ENCODE measurements at regions of chr17 and their contacts with region 1.

Region 1: GRCh38 chr17:78289802-78290363 is 58.5 kb downstream of the TMEM235 start:
- DNase-seq: peak; percentile 61
- ATAC-seq: peak; percentile 99
- H3K4me3 Mint-ChIP-seq: no peak overlapping the region
- H3K27ac Mint-ChIP-seq: no peak overlapping the region
- H3K4me1 Mint-ChIP-seq: peaks cover 3% of the 10 kb centered on the region
- H3K27me3 Mint-ChIP-seq: no peaks in the 10 kb centered on the region
- CTCF ChIP-seq: no peak

Region 2: DNA sequence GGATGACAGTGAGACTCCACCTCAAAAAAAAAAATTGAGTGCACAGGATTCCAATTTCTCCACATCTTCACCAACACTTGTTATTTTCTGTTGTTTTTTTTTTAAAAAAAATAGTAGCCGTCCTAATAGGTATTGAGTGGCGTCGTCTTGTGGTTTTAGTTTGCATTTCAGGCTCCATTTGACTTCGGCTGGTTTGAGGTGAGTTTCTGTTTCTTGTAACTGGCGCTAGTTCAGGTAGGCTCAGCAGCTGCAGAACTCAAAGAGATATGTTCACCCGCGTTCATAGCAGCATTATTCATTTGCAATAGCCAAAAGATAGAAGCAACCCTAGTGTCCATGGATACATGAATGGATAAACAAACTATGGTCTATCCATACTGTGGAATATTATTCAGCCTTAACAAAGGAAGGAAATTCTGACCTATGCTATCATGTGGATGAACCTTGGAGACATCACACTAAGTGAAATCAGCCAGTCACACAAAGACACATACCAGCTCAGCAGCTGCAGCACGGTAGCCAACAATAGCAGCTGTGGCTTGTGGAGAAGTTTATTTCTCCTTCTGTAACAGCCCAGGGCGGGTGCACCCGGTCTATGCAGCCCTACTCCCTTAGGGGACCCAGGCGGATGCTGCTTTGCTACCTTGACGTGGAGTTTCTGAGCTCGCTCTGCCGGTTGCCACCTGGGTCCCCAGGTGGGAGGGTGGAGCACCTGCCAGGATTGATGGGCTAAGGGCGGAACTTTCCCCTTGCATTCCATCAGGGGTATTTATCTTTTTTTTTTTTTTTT is 13.6 kb before region 1 on chr17:
- CTCF ChIA-PET with region 1: no interaction called
- POLR2A ChIA-PET with region 1: interaction called, 7 read pairs
- intact Hi-C with region 1: loop called (anchors 1 kb)
- DNase-seq: peak; percentile 30
- ATAC-seq: peak; percentile 78
- H3K4me3 Mint-ChIP-seq: peak overlapping the region; percentile 38
- H3K27ac Mint-ChIP-seq: peak overlapping the region; percentile 65
- H3K4me1 Mint-ChIP-seq: peaks cover 42% of the 10 kb centered on the region
- H3K27me3 Mint-ChIP-seq: peaks cover 12% of the 10 kb centered on the region
- CTCF ChIP-seq: no peak

Region 3: DNA sequence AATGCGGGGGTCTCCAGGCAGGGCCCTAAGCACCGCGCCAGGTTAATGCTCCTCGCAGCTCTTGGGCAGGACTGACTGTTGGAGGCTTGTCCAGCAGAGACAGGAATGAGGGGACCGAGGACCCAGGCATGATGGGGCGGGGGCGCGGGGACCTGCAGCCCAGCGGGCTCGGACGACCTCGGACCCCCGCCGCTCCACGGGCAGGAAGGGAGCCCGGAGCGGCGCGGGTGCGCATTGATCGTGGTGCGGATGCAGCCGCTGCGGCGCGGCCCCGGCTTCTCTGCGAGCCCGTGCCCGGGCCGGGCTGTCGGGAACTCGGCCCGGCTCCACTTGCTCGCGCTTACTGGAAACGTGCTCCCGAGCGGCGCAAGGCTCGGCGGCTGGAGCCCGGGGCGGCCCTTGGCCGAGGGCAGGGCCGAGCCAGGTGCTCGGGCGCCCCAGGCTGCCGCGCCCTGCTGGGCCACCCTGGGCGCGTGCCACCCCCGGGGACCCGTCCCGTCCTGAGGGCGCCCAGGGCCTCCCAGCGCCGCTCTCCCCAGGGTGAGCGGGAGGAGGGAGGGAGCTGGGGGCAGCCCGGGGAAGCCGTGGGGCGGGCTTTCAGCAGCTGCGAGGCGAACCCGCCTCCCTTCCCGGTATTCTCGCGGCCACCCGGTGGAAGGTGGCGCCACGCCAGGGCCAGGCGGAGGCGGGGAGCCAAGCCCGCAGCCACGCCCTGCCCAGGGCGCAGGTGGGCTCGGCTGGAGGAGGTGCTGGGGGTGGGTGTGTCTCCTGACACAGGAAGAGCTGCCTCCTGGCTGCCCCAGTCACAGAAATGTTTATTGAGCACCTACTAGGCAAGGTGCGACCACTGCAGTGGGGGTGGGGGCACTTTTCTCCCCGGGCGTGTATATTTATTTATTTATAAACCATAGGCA is 24.1 kb after region 1 on chr17:
- CTCF ChIA-PET with region 1: interaction called, 5 read pairs
- POLR2A ChIA-PET with region 1: interaction called, 5 read pairs
- intact Hi-C with region 1: loop called (anchors 2 kb)
- DNase-seq: peak; percentile 65
- ATAC-seq: peak; percentile 78
- H3K4me3 Mint-ChIP-seq: peak overlapping the region; percentile 66
- H3K27ac Mint-ChIP-seq: peak overlapping the region; percentile 24
- H3K4me1 Mint-ChIP-seq: peaks cover 43% of the 10 kb centered on the region
- H3K27me3 Mint-ChIP-seq: peaks cover 6% of the 10 kb centered on the region
- CTCF ChIP-seq: no peak